Spleen (tissue), 13 donors: ENCODE measurements at regions of chr1 and their contacts with region 1.

Region 1: DNA sequence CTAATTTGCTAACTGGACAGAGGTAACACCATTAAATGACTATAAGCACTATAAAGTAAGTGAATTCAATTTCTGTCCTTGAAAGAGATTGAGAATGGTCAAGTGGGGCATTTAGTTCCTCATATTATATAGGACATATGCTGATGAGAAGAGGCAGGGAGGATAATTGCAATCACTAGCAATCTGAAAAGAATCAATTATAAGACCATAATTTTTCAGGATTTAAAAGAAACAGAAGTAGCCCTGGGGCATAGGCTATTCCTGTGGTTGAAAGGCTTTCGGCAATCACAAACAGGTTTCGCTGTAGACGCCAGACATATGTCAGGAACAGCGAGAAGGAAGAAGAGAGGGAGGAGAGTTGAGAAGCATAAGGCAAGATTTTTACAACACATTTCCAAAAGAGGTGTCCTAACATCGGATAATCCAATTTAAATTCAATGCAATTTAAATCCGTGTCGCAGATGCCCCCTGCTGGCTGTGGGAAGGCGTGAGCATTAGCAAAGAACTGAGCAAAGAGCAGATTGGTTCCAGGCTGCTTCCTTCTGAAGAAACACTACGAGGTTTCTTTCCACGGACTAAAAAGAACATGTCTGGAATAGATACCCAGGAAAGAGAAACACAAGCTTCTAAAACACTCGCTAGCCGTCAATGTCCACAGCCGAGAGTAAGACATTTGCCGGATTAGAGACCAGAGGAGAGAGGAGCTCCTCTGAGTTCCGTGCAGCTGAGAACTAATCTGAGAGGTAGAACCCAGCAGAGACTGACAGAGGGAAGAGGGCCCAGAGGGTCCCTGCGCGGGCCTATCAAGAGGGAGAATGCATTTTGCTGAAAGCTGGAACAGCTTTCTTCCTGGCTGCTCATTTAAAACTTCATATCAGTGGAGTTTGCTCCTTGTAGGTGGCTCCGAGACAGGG is 27.9 kb downstream of the RGS5 start:
- DNase-seq: peak; percentile 72
- H3K4me3 ChIP-seq: no peak overlapping the region
- H3K27ac ChIP-seq: no peak overlapping the region
- H3K4me1 ChIP-seq: peaks cover 0 to 11% (median 0%) of the 10 kb centered on the region in 6 donors
- H3K27me3 ChIP-seq: peaks cover 0 to 10% (median 0%) of the 10 kb centered on the region in 7 donors
- CTCF ChIP-seq: peak; percentile 28 to 82 (median 67)
- POLR2A ChIP-seq: no peak

Region 2: DNA sequence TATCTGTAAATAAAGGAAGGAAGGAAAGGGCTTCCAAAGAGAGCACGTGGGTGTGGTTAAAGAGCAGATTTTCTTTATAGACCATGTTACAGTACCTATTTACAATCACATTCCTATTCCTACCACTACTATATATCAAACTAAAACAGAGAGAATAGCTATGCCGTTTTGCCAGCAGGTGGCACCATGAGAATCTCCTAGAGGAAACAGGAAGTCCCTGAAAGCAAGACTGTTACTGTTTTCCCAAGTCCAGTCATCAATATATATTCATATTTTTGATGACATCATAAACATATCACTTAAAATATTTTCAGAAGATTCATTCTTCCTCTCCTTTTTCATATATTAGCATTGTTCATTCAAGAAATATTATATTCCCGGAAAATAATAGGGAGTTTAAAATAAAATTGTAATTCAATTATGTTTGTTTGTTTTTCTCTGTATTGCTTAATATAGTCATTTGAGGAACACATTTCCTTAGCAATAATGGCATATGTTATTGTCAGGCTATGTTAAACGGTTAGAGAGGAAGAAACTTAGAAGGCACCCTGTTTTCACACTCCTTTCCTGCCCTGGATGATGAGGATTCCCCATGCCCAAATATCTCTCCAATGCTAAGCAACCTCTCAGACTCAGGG is 320.4 kb before region 1 on chr1:
- intact Hi-C with region 1: loop called (anchors 10 kb)
- DNase-seq: no peak
- H3K4me3 ChIP-seq: no peak overlapping the region
- H3K27ac ChIP-seq: no peak overlapping the region
- H3K4me1 ChIP-seq: no peaks in the 10 kb centered on the region
- H3K27me3 ChIP-seq: no peaks in the 10 kb centered on the region
- CTCF ChIP-seq: peak in 9 of 11 experiments; percentile 16 to 66 (median 56)
- POLR2A ChIP-seq: no peak

Region 3: DNA sequence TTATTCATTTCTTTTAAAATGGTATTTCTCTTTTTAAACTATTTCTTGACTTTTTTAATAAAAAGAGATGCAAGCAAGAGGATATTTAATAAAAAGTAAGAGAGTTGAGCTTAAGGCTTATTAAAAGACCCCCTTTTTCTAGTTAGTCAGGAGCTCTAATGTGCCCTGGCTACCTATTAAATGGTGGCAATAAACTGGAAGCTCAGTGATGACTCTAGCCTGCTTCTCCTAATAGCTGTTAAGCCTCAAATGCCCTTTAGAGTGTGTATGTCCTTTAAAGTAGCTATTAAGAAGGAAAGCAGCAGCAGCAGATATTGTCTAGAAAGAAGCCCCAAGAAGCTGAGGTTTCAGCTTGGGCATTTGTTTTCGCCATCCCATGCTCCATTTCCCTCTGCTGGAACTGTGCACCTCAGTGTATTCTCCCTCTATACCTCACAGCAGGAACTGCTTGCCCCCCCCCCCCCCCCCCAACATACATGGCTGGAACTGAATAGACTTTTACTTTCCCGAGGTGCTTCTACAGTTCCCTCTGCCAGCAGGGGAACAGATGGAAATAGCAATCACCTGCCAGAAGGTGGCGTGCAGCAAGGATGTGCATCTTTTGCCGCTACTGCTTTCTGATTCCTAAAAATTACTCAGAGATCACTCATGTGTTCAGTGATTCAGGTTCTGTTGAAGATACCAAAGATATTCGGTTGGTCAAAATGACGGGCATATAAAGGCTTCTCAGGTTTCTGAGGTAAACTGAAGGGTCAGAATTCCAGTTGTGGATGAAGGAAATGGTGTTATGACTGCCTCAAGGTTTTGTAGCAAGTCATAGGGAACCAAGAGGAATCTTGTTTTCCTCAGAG is 103.2 kb before region 1 on chr1:
- intact Hi-C with region 1: loop called (anchors 10 kb)
- DNase-seq: no peak
- H3K4me3 ChIP-seq: no peak overlapping the region
- H3K27ac ChIP-seq: no peak overlapping the region
- H3K4me1 ChIP-seq: no peaks in the 10 kb centered on the region
- H3K27me3 ChIP-seq: peaks cover 0 to 61% (median 16%) of the 10 kb centered on the region in 7 donors
- CTCF ChIP-seq: peak in 8 of 11 experiments; percentile 19 to 63 (median 52)
- POLR2A ChIP-seq: no peak

Region 4: DNA sequence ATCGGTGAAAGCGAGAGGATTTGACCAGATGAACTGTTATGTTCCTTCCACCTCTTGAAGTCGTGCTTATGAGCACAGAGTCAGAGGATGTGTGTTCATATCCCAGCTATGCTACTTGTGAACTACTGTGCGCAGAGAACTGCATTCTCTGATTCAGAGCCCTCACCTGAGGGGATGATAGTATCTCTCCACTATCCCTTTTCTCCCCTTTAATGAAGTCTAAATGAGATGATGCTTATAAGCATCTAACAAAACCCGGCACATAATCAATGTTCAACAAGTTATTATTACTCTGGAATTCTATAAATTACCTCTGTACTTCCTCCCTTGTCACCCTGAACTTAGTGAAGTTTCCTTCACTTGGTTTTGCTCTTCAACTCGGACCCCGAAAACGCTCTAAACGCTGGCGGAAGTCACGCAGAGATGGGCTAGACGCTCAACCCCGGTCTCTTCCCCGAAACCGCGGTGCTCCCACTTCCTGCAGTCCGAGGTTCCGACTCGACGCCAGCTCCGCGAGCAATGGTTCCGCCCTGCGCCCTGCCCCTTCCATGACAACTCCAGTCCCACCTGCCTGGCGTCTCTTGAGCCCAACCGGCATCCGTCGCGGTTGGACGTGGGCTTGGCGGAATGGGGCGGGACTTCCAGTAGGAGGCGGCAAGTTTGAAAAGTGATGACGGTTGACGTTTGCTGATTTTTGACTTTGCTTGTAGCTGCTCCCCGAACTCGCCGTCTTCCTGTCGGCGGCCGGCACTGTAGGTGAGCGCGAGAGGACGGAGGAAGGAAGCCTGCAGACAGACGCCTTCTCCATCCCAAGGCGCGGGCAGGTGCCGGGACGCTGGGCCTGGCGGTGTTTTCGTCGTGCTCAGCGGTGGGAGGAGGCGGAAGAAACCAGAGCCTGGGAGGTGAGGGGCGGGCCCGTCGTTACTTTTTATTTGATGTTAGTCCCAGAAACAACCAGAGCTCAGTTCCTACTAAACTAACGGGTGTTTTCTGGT is 146.8 kb after region 1 on chr1 and contains the start of gene NUF2:
- intact Hi-C with region 1: no loop called
- DNase-seq: peak; percentile 99
- H3K4me3 ChIP-seq: peak within 1 kb of the TSS; percentile 61 to 82 (median 75)
- H3K27ac ChIP-seq: peak within 1 kb of the TSS; percentile 70 to 84 (median 76)
- H3K4me1 ChIP-seq: peaks cover 5 to 26% (median 21%) of the 10 kb centered on the region in 6 donors
- H3K27me3 ChIP-seq: no peaks in the 10 kb centered on the region
- CTCF ChIP-seq: peak in 2 of 11 experiments; percentile 19 to 23
- POLR2A ChIP-seq: no peak
- total RNA-seq, gene NUF2: 2.4 to 6.0 (median 4.9) TPM